Activated CD8-positive, alpha-beta T cell treated with anti-CD3 and anti-CD28 coated beads for 36 hours (primary cell): ENCODE measurements at regions of chr7 and their contacts with region 1.

Region 1: DNA sequence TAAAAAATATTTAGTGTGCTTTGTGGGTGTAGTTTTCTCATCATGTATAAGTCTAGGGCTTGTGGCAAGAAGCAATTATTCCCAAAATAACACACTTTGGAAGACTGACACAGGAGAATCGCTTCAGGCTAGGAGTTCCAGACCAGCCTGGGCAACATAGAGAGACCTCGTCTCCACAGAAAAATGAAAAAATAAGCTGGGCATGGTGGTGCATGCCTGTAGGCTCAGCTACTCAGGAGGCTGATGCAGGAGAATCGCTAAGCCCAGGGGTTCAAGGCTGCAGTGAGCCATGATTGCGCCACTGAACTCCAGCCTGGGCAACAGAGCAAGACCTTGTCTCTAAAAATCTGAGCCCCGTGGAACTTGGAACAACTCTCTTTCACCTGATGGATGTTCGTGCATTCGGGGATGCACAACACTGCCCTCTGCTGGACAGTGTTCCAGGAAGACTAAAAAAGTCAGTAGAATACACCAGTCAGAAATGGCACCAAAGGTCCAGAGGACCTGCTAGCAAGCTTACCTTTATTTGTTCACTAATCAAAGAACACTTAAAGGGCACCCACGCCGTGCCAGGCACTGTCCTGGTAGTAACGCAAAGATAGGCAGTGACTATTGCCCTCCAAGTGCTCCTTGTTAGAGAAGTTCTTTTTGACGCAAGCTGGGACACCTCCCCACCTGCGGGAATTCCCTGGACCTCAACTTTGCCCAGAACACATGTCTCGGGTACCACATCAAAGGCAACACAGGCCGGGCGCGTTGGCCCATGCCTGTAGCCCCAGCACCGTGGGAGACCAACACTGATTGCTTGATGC is 81.9 kb upstream of the CALN1 start:
- DNase-seq: peak; percentile 77
- ATAC-seq: no peak
- H3K4me3 Mint-ChIP-seq: no peak overlapping the region
- H3K27ac Mint-ChIP-seq: no peak overlapping the region
- H3K4me1 Mint-ChIP-seq: no peaks in the 10 kb centered on the region
- H3K27me3 Mint-ChIP-seq: no peaks in the 10 kb centered on the region
- CTCF ChIP-seq: peak; percentile 63

Region 2: DNA sequence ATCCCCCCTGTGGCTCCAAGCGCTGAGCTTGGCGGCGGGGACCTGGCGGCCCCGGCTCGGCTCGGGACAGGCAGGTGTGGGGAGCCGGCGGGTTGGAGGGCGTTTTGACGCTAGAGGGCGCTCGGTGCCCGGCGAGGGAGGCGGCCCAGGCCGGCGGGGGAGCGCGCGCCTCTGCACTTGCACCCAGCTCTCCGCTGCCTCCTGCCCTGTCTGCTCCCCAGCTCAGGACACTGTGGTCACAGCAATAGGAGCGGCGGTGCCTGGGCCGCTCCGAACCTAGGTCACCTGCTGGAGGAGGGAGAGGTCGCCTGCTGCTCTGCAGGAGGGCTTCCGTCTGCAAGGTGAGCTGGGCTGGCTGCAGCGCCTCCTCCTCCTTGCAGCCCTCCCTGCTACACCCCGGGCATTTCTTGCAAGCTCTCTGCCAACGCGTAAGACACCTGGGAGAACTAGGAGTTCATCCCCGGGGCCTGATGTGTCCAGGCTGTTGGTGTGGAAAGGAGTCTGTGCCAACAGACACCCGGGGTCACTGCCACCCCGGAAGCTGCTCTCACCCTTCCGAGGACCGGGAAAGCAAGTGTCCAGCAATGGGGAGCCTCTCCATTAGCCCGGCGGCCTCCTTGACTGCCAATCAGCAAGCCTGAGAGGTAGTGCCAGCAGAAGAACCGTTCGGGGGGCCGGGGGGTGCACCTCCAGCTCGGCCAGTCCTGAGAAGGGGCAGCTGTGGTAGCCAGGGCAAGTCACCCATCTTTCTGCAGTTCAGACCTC is 741.7 kb before region 1 on chr7:
- CTCF ChIA-PET with region 1: interaction called, 19 read pairs
- POLR2A ChIA-PET with region 1: no interaction called
- intact Hi-C with region 1: no loop called
- DNase-seq: peak; percentile 59
- ATAC-seq: peak; percentile 45
- H3K4me3 Mint-ChIP-seq: no peak overlapping the region
- H3K27ac Mint-ChIP-seq: no peak overlapping the region
- H3K4me1 Mint-ChIP-seq: no peaks in the 10 kb centered on the region
- H3K27me3 Mint-ChIP-seq: peaks cover 12% of the 10 kb centered on the region
- CTCF ChIP-seq: peak; percentile 67

Region 3: DNA sequence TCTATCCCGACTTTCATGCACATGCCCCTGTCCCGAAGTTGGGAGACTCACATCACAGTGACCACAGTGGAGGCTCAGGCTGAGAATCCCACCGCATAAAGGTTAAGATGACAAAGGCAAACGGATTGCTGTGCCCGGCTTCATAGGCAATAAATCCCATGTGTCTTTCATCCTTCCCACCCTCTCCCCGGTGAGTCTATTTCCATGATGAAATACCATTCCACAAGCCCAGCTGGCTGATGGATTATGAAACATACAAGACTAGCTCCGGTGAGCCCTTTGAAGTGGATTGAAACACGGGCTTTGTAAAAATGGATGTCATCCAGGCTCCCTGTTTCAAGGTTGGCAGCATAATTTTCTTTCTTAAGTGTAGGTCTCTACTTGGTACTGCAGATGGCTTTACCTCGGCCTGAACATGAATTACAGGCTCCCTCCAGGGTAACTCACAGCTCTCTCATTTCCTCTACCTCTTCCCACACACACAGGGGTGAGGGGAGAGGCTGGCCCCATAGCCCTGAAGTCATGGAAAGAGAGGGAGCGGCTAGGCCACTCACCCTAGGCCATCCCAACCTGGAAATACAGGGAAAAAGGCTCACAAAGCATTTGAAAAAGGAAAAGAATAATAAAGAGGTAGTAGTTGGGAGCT is 10.1 kb after region 1 on chr7:
- CTCF ChIA-PET with region 1: interaction called, 13 read pairs
- POLR2A ChIA-PET with region 1: no interaction called
- intact Hi-C with region 1: no loop called
- DNase-seq: no peak
- ATAC-seq: no peak
- H3K4me3 Mint-ChIP-seq: no peak overlapping the region
- H3K27ac Mint-ChIP-seq: no peak overlapping the region
- H3K4me1 Mint-ChIP-seq: no peaks in the 10 kb centered on the region
- H3K27me3 Mint-ChIP-seq: no peaks in the 10 kb centered on the region
- CTCF ChIP-seq: no peak